ENCODE measurements at regions of chr11 and their contacts with region 1.

Region 1: DNA sequence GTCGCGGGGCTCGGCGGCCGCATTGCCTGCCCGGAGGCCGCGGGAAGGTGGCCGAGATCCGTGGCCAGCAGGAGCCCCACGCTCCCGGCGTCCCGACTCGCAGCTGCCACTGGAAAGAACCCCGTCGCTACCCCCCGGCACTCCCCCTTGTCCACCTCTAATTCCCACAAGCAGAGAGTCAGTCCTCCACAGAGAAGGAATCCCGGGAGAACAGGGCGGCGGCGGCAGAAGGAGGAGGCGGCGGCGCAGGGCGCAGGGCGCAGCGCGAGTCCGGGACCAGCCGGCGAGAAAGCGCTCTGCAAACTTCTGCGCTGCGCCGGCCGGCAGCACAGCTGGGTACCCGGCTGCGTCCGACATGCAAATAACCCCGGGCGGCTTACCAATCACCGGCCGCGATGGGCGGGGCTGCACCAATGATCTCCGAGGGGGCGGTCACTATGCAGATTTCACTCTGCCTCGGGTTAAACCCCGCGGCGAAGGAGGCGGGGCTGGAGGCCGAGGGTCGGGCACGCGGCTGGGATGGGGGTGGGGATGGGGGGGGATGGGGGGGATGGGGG is at the start of gene ABTB2:
- DNase-seq: peak; percentile 95
- H3K4me3 Mint-ChIP-seq: peak within 1 kb of the TSS; percentile 74
- H3K27ac Mint-ChIP-seq: no peak within 1 kb of the TSS
- H3K4me1 Mint-ChIP-seq: peaks cover 8% of the 10 kb centered on the region
- H3K27me3 Mint-ChIP-seq: no peaks in the 10 kb centered on the region
- CTCF ChIP-seq: no peak
- total RNA-seq, gene ABTB2: 2.9 and 3.1 TPM in 2 replicates

Region 2: GRCh38 chr11:33835143-33835878 is 522.5 kb before region 1 on chr11:
- CTCF ChIA-PET with region 1: no interaction called
- POLR2A ChIA-PET with region 1: no interaction called
- intact Hi-C with region 1: loop called (anchors 1 kb)
- DNase-seq: peak; percentile 59
- H3K4me3 Mint-ChIP-seq: no peak overlapping the region
- H3K27ac Mint-ChIP-seq: no peak overlapping the region
- H3K4me1 Mint-ChIP-seq: peaks cover 12% of the 10 kb centered on the region
- H3K27me3 Mint-ChIP-seq: peaks cover 20% of the 10 kb centered on the region
- CTCF ChIP-seq: peak; percentile 45

Region 3: DNA sequence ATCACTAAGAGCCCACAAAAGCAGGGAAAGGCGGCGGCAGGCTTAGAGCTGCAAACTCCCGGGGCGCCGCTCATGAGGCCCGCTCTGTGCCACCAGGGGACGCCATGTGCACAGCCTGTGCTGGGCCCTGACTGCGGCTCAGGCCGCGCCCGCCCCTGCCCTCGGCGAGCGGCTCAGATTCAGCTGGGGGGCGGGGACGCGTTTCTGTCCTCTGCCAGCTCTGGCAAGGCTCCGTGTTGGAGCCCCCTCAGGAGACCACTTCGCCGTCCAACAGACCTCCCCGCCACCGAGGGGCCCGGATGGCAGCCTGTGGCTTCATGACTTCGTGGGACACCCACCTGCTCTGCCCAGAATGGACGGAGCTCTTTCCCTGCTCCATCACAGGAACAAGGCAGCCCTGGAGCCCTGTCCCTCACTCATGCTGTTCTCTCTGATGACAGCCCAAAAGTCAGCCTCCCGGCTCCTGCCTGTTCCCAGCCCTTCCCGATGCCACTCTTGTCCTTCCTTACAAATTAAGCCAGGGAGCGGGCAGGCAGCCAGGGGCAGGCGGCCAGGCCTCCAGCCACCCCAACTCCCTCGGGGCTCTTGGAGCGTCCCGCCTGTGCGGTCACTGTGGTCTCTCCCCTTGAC is 183.3 kb before region 1 on chr11:
- CTCF ChIA-PET with region 1: interaction called, 108 read pairs
- POLR2A ChIA-PET with region 1: interaction called, 12 read pairs
- intact Hi-C with region 1: loop called (anchors 1 kb)
- DNase-seq: peak; percentile 76
- H3K4me3 Mint-ChIP-seq: peak overlapping the region; percentile 45
- H3K27ac Mint-ChIP-seq: no peak overlapping the region
- H3K4me1 Mint-ChIP-seq: no peaks in the 10 kb centered on the region
- H3K27me3 Mint-ChIP-seq: no peaks in the 10 kb centered on the region
- CTCF ChIP-seq: peak; percentile 96

Region 4: GRCh38 chr11:34250732-34251639 is 106.8 kb before region 1 on chr11:
- CTCF ChIA-PET with region 1: interaction called, 3 read pairs
- POLR2A ChIA-PET with region 1: no interaction called
- intact Hi-C with region 1: loop called (anchors 5 kb)
- DNase-seq: peak; percentile 80
- H3K4me3 Mint-ChIP-seq: no peak overlapping the region
- H3K27ac Mint-ChIP-seq: peak overlapping the region; percentile 11
- H3K4me1 Mint-ChIP-seq: peaks cover 16% of the 10 kb centered on the region
- H3K27me3 Mint-ChIP-seq: no peaks in the 10 kb centered on the region
- CTCF ChIP-seq: no peak

Region 5: DNA sequence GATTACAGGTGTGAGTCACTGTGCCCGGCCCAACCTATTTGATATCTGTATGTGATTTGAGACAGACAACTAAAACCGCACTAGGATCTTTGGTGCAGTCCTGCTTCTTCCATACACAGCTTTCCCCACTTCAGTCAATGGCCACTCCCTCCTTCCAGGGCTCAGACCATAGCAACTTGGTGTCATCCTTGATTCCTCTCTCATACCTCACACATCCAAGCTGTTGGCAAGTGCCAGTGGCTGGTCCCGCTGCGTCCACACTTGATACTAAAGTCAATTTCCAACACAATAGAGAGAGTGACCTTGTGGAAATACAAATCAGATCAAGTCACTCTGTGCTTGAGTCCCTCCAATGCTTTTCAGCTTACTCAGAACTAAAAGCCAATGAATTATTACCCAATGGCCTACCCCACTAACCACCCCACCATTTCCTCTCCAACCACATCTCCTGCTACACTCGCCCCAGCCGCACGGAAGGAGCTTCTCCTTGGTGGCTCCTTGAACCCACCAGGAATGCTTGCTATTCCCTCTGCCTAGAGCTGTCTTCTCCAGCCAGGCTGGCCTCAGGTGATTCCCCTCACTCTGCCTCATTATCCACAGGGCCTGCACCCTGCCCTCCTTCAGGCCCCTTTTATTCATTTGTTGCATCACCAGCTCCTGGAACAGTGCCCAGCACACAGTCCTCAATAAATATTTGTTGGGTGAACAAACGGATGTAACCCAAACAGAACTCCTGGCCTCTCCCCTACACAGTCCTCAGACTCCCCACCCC is 12.8 kb before region 1 on chr11:
- CTCF ChIA-PET with region 1: interaction called, 17 read pairs
- POLR2A ChIA-PET with region 1: interaction called, 5 read pairs
- intact Hi-C with region 1: no loop called
- DNase-seq: peak; percentile 91
- H3K4me3 Mint-ChIP-seq: no peak overlapping the region
- H3K27ac Mint-ChIP-seq: no peak overlapping the region
- H3K4me1 Mint-ChIP-seq: peaks cover 25% of the 10 kb centered on the region
- H3K27me3 Mint-ChIP-seq: no peaks in the 10 kb centered on the region
- CTCF ChIP-seq: no peak

Region 6: DNA sequence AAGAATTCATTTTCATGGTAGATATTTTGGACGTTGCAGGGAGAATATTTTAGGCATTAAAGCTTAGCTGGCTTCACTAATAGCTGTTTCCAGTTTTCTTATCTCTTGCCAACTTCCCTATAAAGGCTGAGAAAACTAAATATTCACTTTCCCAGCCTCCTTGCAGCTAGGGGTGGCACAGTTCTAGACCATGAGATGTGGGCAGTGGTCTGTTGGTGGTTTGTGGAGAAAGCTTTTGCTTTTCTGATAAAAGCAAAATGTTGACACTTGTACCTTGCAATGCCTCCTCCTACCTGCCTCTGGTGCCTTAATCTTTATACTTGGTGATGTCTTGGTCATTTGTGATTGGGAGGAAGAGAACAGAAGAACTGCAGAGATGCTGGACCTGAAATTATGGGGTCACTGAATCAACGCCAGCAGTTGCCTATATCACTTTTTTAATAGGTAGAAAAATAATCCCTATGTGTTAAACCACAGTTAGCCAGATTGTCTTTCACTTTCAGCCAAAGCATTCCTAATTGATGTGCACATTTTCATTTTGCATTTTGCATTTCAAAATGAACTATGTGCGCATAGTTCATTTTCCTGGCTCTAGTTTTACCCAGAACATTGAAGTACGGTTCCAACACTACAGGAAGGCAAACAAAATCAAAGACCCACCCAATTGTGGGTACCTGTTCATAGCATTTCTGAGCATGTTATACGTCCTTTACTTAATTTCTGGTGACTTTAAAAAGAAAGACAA is 24.9 kb after region 1 on chr11:
- CTCF ChIA-PET with region 1: no interaction called
- POLR2A ChIA-PET with region 1: no interaction called
- intact Hi-C with region 1: no loop called
- DNase-seq: no peak
- H3K4me3 Mint-ChIP-seq: no peak overlapping the region
- H3K27ac Mint-ChIP-seq: no peak overlapping the region
- H3K4me1 Mint-ChIP-seq: peaks cover 8% of the 10 kb centered on the region
- H3K27me3 Mint-ChIP-seq: no peaks in the 10 kb centered on the region
- CTCF ChIP-seq: no peak

Region 7: GRCh38 chr11:34492806-34493414 is 135.1 kb after region 1 on chr11:
- CTCF ChIA-PET with region 1: interaction called, 158 read pairs
- POLR2A ChIA-PET with region 1: interaction called, 3 read pairs
- intact Hi-C with region 1: no loop called
- DNase-seq: peak; percentile 76
- H3K4me3 Mint-ChIP-seq: no peak overlapping the region
- H3K27ac Mint-ChIP-seq: no peak overlapping the region
- H3K4me1 Mint-ChIP-seq: no peaks in the 10 kb centered on the region
- H3K27me3 Mint-ChIP-seq: no peaks in the 10 kb centered on the region
- CTCF ChIP-seq: peak; percentile 56

Region 8: DNA sequence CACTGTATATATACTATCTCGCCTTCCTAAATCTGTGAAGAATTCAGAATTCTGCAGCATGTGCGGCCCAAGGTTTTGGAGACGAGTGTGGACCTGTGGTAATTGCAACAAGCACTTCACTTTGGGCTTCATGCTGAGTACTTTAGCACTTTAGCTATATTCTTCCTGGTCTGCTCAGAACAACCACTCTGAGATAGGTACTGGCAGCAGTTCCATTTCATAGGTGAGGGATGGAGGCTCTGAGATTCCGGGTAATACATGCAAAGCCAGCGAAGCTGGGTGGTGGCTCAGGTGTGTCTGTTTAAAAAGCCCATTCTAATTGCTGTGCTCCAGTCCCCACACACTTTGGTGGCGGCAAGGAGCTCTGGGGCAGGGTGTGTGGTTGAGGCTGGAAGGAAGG is 149.4 kb after region 1 on chr11:
- CTCF ChIA-PET with region 1: no interaction called
- POLR2A ChIA-PET with region 1: no interaction called
- intact Hi-C with region 1: no loop called
- DNase-seq: no peak
- H3K4me3 Mint-ChIP-seq: no peak overlapping the region
- H3K27ac Mint-ChIP-seq: no peak overlapping the region
- H3K4me1 Mint-ChIP-seq: peaks cover 1% of the 10 kb centered on the region
- H3K27me3 Mint-ChIP-seq: no peaks in the 10 kb centered on the region
- CTCF ChIP-seq: no peak

Measured in MCF 10A (cell line).